Gastrocnemius medialis (tissue), 4 donors: ENCODE measurements at regions of chr4 and their contacts with region 1.

Region 1: GRCh38 chr4:25421816-25422525 is 44.9 kb downstream of the ANAPC4 start:
- DNase-seq: no peak
- ATAC-seq: no peak
- H3K4me3 ChIP-seq: no peak overlapping the region
- H3K27ac ChIP-seq: no peak overlapping the region
- H3K4me1 ChIP-seq: peaks cover 5 to 12% of the 10 kb centered on the region in 2 donors
- H3K27me3 ChIP-seq: no peaks in the 10 kb centered on the region
- CTCF ChIP-seq: no peak
- POLR2A ChIP-seq: no peak

Region 2: DNA sequence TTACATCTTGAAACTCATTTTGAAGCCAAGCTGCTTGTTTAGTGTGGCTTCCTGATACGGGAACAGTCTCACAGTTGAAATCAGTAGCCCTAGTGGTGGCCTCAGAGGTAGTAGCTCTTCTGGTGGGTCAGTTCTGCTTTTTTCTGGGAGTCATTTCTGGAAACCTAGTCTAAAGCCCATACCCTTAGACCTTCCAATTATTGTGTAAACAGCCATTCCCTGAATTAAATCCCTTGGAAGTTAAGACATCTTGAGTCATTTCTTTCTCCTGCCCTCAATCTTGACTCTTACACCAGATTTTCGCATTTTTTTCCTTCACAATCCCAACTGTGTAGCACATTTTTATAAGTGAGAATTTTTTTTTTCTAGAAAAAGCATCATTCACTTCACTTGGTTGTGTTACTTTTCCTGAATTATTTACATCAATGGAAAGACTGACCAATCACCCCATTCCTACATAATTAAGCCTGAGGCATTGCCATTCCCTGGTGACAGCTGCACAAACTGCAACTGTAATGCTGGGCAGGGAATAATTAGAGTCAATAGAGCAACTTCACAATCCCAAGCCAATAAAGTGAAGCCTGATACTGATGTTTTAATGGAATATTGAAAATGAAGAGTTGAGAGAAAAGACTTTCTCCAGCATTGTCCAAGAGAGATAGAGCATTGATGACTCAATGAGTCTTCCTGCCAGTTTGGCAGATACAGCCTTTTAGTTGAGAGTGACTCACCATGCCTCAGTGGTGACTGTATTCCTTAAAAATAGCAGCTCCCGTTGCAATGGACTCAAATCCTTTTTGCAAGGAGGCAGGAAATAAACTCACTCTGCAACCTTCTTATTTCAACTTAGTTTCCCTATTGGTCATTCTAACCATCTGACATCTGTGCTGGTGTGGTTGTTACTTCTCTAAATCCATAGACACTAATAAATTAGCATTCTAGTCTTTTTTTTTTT is 248.7 kb before region 1 on chr4:
- in situ Hi-C with region 1: no loop called
- intact Hi-C with region 1: no loop called
- DNase-seq: peak; percentile 69 to 76
- ATAC-seq: peak; percentile 100
- H3K4me3 ChIP-seq: peak overlapping the region in 1 of 4 donors; percentile 0
- H3K27ac ChIP-seq: peak overlapping the region; percentile 25 to 66 (median 62)
- H3K4me1 ChIP-seq: peaks cover 15 to 16% of the 10 kb centered on the region in 2 donors
- H3K27me3 ChIP-seq: no peaks in the 10 kb centered on the region
- CTCF ChIP-seq: no peak
- POLR2A ChIP-seq: no peak

Region 3: GRCh38 chr4:25767877-25768725 is 346.1 kb after region 1 on chr4:
- in situ Hi-C with region 1: loop called in 2 of 4 experiments (anchors 25 kb)
- intact Hi-C with region 1: loop called (anchors 5 kb)
- DNase-seq: peak; percentile 6 to 21
- ATAC-seq: peak in 1 of 2 donors; percentile 66
- H3K4me3 ChIP-seq: no peak overlapping the region
- H3K27ac ChIP-seq: no peak overlapping the region
- H3K4me1 ChIP-seq: no peaks in the 10 kb centered on the region
- H3K27me3 ChIP-seq: no peaks in the 10 kb centered on the region
- CTCF ChIP-seq: peak in 4 of 5 experiments; percentile 24 to 70 (median 46)
- POLR2A ChIP-seq: no peak